Activated CD4-positive, alpha-beta T cell treated with anti-CD3 and anti-CD28 coated beads for 36 hours (primary cell): ENCODE measurements at regions of chr2 and their contacts with region 1.

Region 1: GRCh38 chr2:226984750-226985582 is 149.1 kb downstream of the RHBDD1 start:
- DNase-seq: peak; percentile 49
- ATAC-seq: peak; percentile 96
- H3K4me3 Mint-ChIP-seq: no peak overlapping the region
- H3K27ac Mint-ChIP-seq: no peak overlapping the region
- H3K4me1 Mint-ChIP-seq: peaks cover 33% of the 10 kb centered on the region
- H3K27me3 Mint-ChIP-seq: no peaks in the 10 kb centered on the region

Region 2: GRCh38 chr2:225668606-225669266 is 1316.2 kb before region 1 on chr2:
- CTCF ChIA-PET with region 1: interaction called, 3 read pairs
- POLR2A ChIA-PET with region 1: no interaction called
- intact Hi-C with region 1: loop called in 1 of 2 experiments (anchors 5 kb)
- DNase-seq: peak; percentile 14
- ATAC-seq: peak; percentile 79
- H3K4me3 Mint-ChIP-seq: no peak overlapping the region
- H3K27ac Mint-ChIP-seq: no peak overlapping the region
- H3K4me1 Mint-ChIP-seq: no peaks in the 10 kb centered on the region
- H3K27me3 Mint-ChIP-seq: peaks cover 10% of the 10 kb centered on the region

Region 3: GRCh38 chr2:225889446-225889850 is 1095.5 kb before region 1 on chr2:
- CTCF ChIA-PET with region 1: no interaction called
- POLR2A ChIA-PET with region 1: no interaction called
- intact Hi-C with region 1: loop called in 1 of 2 experiments (anchors 10 kb)
- DNase-seq: no peak
- ATAC-seq: no peak
- H3K4me3 Mint-ChIP-seq: no peak overlapping the region
- H3K27ac Mint-ChIP-seq: no peak overlapping the region
- H3K4me1 Mint-ChIP-seq: no peaks in the 10 kb centered on the region
- H3K27me3 Mint-ChIP-seq: peaks cover 11% of the 10 kb centered on the region

Region 4: DNA sequence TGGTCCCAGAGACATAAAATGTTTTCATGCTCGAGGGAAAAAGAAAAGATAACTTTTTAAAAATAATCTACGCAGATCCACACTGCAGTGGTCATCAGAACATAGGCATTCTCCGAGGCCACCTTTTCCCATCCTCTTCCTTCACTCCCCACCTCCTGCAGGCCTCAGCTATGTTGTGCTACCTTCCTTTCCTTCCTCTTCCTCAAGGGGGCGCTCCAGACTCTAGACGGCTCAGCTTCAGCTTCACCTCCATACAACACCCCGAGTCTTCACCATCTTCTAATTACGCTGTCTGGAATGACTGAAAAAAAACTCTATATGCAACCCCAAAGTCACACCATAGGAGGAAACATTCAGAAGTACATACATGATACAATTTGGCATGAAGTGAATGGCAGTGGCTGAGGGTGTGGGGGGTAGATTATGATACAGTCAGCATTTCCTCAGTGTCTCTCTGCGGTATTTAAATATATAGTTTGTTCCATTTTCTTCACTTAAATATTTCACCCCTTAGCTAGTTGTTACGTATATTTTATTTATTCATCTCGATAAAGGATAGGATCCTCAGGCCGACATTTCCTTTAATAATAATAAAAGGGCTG is 769.0 kb before region 1 on chr2:
- CTCF ChIA-PET with region 1: no interaction called
- POLR2A ChIA-PET with region 1: no interaction called
- intact Hi-C with region 1: loop called in 1 of 2 experiments (anchors 1 kb)
- DNase-seq: peak; percentile 80
- ATAC-seq: peak; percentile 95
- H3K4me3 Mint-ChIP-seq: no peak overlapping the region
- H3K27ac Mint-ChIP-seq: no peak overlapping the region
- H3K4me1 Mint-ChIP-seq: no peaks in the 10 kb centered on the region
- H3K27me3 Mint-ChIP-seq: peaks cover 3% of the 10 kb centered on the region

Region 5: DNA sequence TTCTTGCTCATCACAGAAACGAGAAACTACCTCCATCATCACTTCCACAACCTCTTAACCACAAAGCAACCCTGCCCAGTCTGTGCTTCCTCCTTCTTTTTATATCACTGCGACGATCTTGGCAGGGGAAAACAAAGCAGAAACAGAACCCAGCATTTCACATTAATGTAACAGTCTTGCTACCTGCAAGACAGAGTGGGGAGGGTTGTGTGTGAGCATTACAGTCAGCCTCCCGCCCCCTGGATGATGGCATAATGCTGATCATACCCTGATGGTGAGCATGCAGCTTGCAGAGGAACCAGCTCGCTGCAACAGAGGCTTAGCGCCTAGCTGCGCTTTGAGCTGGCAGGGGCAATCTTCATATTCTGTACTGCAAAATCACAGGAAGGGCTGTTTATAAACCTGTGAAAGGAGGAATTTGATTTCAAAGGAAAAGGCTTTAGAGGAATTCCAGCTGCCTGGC is 561.4 kb before region 1 on chr2:
- CTCF ChIA-PET with region 1: no interaction called
- POLR2A ChIA-PET with region 1: no interaction called
- intact Hi-C with region 1: loop called in 1 of 2 experiments (anchors 10 kb)
- DNase-seq: peak; percentile 69
- ATAC-seq: peak; percentile 94
- H3K4me3 Mint-ChIP-seq: no peak overlapping the region
- H3K27ac Mint-ChIP-seq: no peak overlapping the region
- H3K4me1 Mint-ChIP-seq: peaks cover 12% of the 10 kb centered on the region
- H3K27me3 Mint-ChIP-seq: peaks cover 14% of the 10 kb centered on the region

Region 6: DNA sequence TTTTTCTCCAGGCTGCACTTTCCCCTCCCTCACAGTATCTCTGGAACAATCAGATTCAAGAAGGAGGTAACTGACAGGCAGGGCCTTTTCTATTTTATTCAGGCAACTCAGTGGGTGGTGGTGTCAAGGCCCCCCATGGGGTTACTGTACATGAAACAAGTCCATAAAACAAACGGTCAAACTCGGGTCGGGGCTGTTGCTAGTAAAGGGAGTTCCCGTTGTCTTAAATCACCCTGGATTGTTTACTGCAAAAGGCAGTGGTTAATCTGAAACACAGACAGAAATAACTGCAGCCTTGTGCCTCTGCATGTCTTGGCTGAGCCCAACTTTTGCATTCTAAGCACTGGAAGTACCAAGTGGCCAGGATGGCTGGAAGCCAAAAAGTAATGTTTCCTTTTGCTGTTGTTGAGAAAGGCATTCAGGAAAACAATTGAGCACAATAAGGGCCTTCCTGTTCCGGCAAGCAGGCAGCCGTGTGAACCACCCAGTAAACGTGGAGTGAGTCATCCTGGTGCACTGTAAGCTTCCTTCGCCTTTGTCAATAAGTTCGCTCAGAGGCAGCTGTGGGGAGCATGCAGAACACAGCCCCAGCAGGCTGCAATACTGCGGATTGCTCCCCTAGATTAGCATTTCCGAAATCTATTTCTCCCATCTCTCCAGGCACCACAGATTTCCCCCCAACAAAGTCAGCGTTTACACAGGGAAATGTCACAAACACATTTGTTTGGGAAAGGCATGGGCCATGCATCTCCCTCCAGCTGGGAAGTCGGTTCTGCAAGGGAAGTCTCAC is 334.9 kb before region 1 on chr2:
- CTCF ChIA-PET with region 1: no interaction called
- POLR2A ChIA-PET with region 1: no interaction called
- intact Hi-C with region 1: loop called in 1 of 2 experiments (anchors 10 kb)
- DNase-seq: peak; percentile 65
- ATAC-seq: peak; percentile 97
- H3K4me3 Mint-ChIP-seq: no peak overlapping the region
- H3K27ac Mint-ChIP-seq: peak overlapping the region; percentile 43
- H3K4me1 Mint-ChIP-seq: peaks cover 20% of the 10 kb centered on the region
- H3K27me3 Mint-ChIP-seq: peaks cover 4% of the 10 kb centered on the region